Dendritic cell treated with granulocyte-macrophage colony-stimulating factor and Interleukin-4, amounts not matched to agents 40 ng/mL and 50 ng/mL, for 4 days (primary cell): ENCODE measurements at regions of chr6 and their contacts with region 1.

Region 1: GRCh38 chr6:28940858-28941680 is 17.3 kb upstream of the TRIM27 start:
- H3K4me3 Mint-ChIP-seq: peak overlapping the region; percentile 86
- H3K27ac Mint-ChIP-seq: peak overlapping the region; percentile 75
- H3K4me1 Mint-ChIP-seq: peaks cover 56% of the 10 kb centered on the region
- H3K27me3 Mint-ChIP-seq: peaks cover 1% of the 10 kb centered on the region

Region 2: DNA sequence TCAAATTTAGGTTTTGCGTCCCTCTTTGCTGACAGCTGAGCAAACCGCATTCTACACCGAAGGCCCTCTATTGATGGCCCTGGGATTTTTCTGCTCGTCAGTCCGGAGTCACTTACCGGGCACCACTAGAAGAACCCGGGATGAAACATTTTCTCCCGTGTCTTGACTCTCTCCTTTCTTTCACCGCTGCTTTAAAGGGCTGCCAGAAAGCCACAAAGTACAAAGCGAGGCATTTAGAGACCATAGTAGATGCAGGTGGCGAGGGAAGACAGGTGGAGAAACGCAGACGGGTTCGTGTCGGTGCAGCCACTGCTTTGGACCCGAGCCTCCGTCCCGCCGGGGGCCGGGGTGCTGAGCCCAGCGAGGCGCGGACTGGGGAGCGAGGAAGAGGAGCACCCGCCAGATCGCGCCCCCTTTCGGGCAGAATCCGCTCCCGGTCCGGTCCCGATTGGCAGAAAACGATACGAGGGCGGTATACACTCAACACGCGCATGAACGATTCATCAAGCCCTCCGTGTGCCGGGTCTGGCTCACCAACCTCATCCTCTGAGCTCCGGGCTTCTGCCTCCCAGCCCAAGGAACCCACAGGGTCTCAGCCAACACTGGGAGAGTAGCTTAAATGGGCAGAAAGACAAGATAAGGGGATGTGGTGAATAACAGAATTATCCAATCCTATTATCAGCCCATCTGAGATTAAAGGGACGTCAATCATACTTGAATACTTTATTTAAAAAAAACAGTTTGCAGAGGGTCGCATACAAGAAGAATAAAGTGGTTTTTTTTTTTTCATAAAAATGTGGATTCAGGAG is 102.2 kb before region 1 on chr6:
- intact Hi-C with region 1: loop called (anchors 1 kb)
- H3K4me3 Mint-ChIP-seq: peak overlapping the region; percentile 83
- H3K27ac Mint-ChIP-seq: peak overlapping the region; percentile 70
- H3K4me1 Mint-ChIP-seq: peaks cover 22% of the 10 kb centered on the region
- H3K27me3 Mint-ChIP-seq: peaks cover 79% of the 10 kb centered on the region

Region 3: DNA sequence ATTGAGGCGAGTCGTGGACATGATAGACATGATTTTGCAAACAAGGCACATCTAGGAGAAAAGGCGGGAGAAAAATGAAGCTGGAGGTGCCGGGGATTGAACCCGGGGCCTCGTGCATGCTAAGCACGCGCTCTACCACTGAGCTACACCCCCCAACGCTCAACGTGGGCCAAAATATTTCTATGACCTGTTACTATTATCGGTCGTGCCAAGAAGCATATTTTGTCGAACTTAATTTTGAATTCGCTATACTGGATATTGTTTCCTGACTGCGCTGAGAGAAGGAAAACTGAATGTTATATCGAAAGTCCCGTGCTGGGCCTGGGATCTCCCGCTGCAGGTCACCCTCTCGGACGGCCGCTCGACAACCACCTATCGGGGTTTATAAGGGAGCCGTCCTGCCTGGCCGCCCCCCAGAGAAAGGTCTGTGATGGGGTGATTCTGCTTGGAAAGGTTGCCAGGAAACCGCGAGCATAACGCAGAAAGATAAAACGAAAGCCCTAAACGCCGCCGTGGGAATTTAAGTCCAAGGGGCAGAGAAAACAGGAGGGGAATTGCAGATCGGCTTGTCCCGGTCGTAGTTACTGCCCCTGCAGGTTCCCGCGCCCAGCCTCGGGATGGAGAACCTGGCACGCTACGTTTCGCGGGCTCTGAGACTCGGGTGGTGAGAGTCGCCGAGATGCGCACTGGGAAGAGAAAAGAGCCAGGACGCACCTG is 77.3 kb before region 1 on chr6:
- intact Hi-C with region 1: loop called (anchors 2 kb)
- H3K4me3 Mint-ChIP-seq: peak overlapping the region; percentile 87
- H3K27ac Mint-ChIP-seq: peak overlapping the region; percentile 60
- H3K4me1 Mint-ChIP-seq: peaks cover 27% of the 10 kb centered on the region
- H3K27me3 Mint-ChIP-seq: peaks cover 41% of the 10 kb centered on the region

Region 4: DNA sequence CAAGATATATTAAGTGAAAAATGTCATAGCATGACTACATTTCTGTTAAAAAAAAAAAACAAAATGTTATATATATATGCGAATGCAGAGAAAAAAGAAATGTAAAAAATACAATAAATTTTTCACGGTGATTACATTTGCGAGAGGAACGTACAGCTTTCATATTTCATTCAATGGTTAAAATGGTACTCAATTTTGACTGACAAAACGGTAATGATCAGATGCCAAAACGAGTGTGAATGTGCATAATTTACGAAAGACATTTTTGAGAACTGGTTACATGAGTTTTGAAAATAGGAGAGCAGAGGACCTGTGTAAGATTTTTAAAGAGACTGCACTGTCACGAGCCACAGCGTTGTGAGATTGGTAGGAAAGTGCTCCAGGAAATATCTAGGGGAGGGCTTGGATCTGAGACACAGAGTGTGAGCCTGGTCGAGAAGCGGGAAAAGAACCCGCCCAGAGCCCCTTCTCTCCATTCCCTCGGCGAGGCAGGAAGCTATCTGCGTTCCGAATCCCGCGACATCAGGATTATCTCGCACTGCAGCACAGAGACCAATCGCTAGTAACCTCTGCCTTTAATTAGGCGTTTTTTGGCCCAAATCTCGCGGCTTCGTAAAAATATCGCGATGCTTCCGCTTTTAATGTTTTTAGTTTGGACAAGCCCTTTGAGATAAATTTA is 45.8 kb before region 1 on chr6:
- intact Hi-C with region 1: loop called (anchors 1 kb)
- H3K4me3 Mint-ChIP-seq: peak overlapping the region; percentile 90
- H3K27ac Mint-ChIP-seq: peak overlapping the region; percentile 99
- H3K4me1 Mint-ChIP-seq: peaks cover 27% of the 10 kb centered on the region
- H3K27me3 Mint-ChIP-seq: peaks cover 8% of the 10 kb centered on the region

Region 5: GRCh38 chr6:28923318-28924102 is 17.6 kb before region 1 on chr6 and contains the start of gene TRIM27:
- intact Hi-C with region 1: loop called (anchors 1 kb)
- H3K4me3 Mint-ChIP-seq: peak within 1 kb of the TSS; percentile 96
- H3K27ac Mint-ChIP-seq: peak within 1 kb of the TSS; percentile 95
- H3K4me1 Mint-ChIP-seq: peaks cover 39% of the 10 kb centered on the region
- H3K27me3 Mint-ChIP-seq: no peaks in the 10 kb centered on the region

Region 6: GRCh38 chr6:29016559-29017427 is 75.7 kb after region 1 on chr6:
- intact Hi-C with region 1: loop called (anchors 2 kb)
- H3K4me3 Mint-ChIP-seq: peak overlapping the region; percentile 80
- H3K27ac Mint-ChIP-seq: peak overlapping the region; percentile 46
- H3K4me1 Mint-ChIP-seq: peaks cover 14% of the 10 kb centered on the region
- H3K27me3 Mint-ChIP-seq: peaks cover 59% of the 10 kb centered on the region